ENCODE measurements at regions of chr12 and their contacts with region 1.

Region 1: DNA sequence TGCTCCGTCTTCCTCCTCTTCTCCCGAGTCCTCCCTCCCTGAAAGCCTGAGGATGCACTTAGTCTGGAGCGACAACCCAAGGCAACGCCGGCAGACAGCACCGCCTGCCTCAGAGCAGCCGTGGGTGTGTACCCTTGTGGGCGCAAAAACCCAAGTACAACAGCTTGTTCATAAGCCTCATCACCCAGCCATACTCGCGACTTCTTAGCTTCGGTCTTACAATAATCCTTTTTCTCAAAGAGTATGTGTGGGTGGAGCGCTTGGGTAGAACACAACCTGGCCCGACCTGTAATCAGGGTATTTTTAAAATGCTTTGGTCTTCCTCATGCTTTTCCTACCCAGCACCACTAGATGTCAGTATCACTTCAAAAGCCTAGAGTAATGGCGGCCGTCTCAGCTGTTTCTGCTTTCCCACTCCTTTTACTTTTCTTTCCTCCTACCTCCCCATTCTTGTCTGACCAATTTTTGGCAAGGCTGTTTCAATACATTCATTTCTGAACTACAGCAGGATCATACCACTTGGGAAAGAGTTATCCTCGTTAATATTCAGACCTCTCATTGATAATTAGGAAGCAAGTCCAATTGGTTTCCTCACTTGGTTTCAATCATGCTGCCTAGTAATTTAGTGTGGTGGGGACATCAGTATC is 198.9 kb downstream of the EPS8 start:
- DNase-seq: peak; percentile 76

Region 2: GRCh38 chr12:15575671-15576541 is 14.4 kb before region 1 on chr12:
- CTCF ChIA-PET with region 1: no interaction called
- POLR2A ChIA-PET with region 1: no interaction called
- DNase-seq: no peak

Region 3: GRCh38 chr12:15650399-15651128 is 60.3 kb after region 1 on chr12:
- CTCF ChIA-PET with region 1: no interaction called
- POLR2A ChIA-PET with region 1: no interaction called
- DNase-seq: peak; percentile 8

Region 4: DNA sequence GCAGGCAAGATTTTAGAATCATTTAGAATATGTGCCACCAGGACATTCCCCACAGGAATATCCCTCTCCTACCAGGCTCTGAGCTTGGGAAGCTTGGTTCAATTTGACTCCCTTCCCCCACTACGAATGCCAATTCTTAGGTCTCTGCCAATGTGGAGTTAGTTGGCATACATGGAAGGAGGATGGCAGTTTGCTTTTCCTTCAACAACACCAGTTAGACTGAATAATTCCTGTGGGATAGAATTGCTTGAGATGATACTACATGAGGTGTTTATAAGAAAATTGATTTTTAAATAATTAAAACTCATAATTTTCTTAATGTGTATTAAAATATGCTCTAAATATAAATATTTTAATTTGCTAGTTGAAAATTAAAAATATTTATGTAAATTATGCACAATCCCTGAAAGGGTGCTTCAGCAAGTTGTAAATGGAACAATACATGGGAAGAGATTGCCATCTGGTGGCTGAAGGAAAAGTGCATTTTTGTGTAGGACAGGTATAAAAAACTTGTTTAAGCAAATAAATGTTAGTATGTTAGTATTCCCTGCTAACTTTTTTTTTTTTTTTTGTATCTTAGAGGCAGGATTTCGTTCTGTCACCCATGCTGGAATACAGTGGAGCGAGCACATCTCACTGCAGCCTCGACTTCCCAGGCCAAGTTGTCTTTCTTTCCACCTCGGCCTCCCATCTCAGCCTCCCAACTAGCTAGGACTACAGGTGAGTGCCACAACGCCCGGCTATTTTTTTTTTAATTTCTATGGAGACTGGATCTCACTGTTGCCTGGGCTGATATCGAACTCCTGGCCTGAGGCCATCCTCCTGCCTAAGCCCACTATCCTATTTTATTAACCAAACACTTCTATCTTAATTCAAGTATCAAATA is 266.0 kb after region 1 on chr12:
- CTCF ChIA-PET with region 1: interaction called, 13 read pairs
- POLR2A ChIA-PET with region 1: no interaction called
- DNase-seq: peak; percentile 32

Measured in HEK293T (cell line).